Mammary epithelial cell (primary cell): ENCODE measurements at regions of chr4 and their contacts with region 1.

Region 1: GRCh38 chr4:73258686-73259570 is at the start of gene ANKRD17:
- DNase-seq: peak; percentile 94
- H3K4me3 ChIP-seq: peak within 1 kb of the TSS; percentile 70 to 97 (median 96)
- H3K27ac ChIP-seq: peak within 1 kb of the TSS; percentile 97
- H3K4me1 ChIP-seq: peaks cover 12% of the 10 kb centered on the region
- H3K27me3 ChIP-seq: no peaks in the 10 kb centered on the region
- CTCF ChIP-seq: peak in 1 of 2 donors; percentile 22
- total RNA-seq, gene ANKRD17: 66.2 to 70.6 TPM

Region 2: GRCh38 chr4:73036123-73036522 is 222.8 kb before region 1 on chr4:
- CTCF ChIA-PET with region 1: no interaction called
- dilution Hi-C with region 1: no loop called
- in situ Hi-C with region 1: no loop called
- intact Hi-C with region 1: loop called (anchors 1 kb)
- DNase-seq: no peak
- H3K4me3 ChIP-seq: no peak overlapping the region
- H3K27ac ChIP-seq: no peak overlapping the region
- H3K4me1 ChIP-seq: no peaks in the 10 kb centered on the region
- H3K27me3 ChIP-seq: no peaks in the 10 kb centered on the region
- CTCF ChIP-seq: no peak

Region 3: GRCh38 chr4:73047896-73048295 is 211.0 kb before region 1 on chr4:
- CTCF ChIA-PET with region 1: no interaction called
- dilution Hi-C with region 1: no loop called
- in situ Hi-C with region 1: no loop called
- intact Hi-C with region 1: no loop called
- DNase-seq: no peak
- H3K4me3 ChIP-seq: no peak overlapping the region
- H3K27ac ChIP-seq: no peak overlapping the region
- H3K4me1 ChIP-seq: no peaks in the 10 kb centered on the region
- H3K27me3 ChIP-seq: no peaks in the 10 kb centered on the region
- CTCF ChIP-seq: no peak

Region 4: DNA sequence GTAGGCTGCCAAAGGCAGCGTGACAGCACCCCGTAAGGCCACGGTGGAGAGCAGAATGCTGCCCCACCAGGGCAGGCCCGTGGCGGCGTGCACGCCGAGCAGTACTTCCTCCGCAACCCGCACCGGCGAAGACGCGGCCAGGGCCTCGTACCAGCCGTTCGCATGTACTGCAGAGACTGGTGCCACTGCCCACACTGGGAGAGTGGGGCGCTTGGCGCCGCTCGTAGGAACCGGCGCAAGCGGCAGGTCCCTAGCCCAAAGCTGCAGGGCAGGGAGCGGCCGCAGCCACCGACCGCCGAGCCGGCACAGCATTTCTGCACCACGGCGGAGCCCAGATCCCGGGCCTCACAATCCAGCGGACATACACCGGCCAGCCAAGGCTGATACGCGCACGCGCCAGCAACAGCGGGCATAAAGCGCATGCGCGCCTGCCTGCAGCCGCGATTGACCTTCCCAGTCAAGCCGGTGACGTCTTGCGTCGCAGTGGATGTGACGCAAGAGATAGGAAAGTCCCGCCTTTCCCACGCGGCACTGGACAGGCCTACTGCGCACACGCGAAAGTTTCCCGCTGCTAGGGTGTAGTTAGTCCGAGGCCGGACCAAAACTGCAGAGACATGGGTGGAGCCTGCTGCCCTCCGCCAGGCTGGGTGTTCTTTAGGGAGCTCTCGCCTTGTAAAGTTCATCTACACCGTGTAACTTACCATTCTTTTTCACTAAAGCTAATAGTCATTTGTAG is 189.4 kb before region 1 on chr4 and contains the start of gene COX18:
- CTCF ChIA-PET with region 1: no interaction called
- dilution Hi-C with region 1: no loop called
- in situ Hi-C with region 1: no loop called
- intact Hi-C with region 1: loop called (anchors 1 kb)
- DNase-seq: peak; percentile 97
- H3K4me3 ChIP-seq: peak within 1 kb of the TSS; percentile 68 to 88 (median 76)
- H3K27ac ChIP-seq: peak within 1 kb of the TSS; percentile 90
- H3K4me1 ChIP-seq: peaks cover 6% of the 10 kb centered on the region
- H3K27me3 ChIP-seq: no peaks in the 10 kb centered on the region
- CTCF ChIP-seq: peak in 1 of 2 donors; percentile 17
- total RNA-seq, gene COX18: 13.5 to 30.5 TPM

Region 5: GRCh38 chr4:73127839-73128453 is 131.0 kb before region 1 on chr4:
- CTCF ChIA-PET with region 1: no interaction called
- dilution Hi-C with region 1: no loop called
- in situ Hi-C with region 1: no loop called
- intact Hi-C with region 1: loop called (anchors 1 kb)
- DNase-seq: no peak
- H3K4me3 ChIP-seq: no peak overlapping the region
- H3K27ac ChIP-seq: no peak overlapping the region
- H3K4me1 ChIP-seq: no peaks in the 10 kb centered on the region
- H3K27me3 ChIP-seq: no peaks in the 10 kb centered on the region
- CTCF ChIP-seq: peak; percentile 9 to 33

Region 6: GRCh38 chr4:73142995-73143547 is 115.9 kb before region 1 on chr4:
- CTCF ChIA-PET with region 1: no interaction called
- dilution Hi-C with region 1: no loop called
- in situ Hi-C with region 1: no loop called
- intact Hi-C with region 1: loop called (anchors 5 kb)
- DNase-seq: no peak
- H3K4me3 ChIP-seq: no peak overlapping the region
- H3K27ac ChIP-seq: no peak overlapping the region
- H3K4me1 ChIP-seq: no peaks in the 10 kb centered on the region
- H3K27me3 ChIP-seq: no peaks in the 10 kb centered on the region
- CTCF ChIP-seq: peak; percentile 13 to 19

Region 7: GRCh38 chr4:73222466-73223257 is 36.3 kb before region 1 on chr4:
- CTCF ChIA-PET with region 1: no interaction called
- dilution Hi-C with region 1: no loop called
- in situ Hi-C with region 1: no loop called
- intact Hi-C with region 1: loop called (anchors 2 kb)
- DNase-seq: peak; percentile 90
- H3K4me3 ChIP-seq: peak overlapping the region; percentile 55 to 95 (median 86)
- H3K27ac ChIP-seq: peak overlapping the region; percentile 96
- H3K4me1 ChIP-seq: peaks cover 5% of the 10 kb centered on the region
- H3K27me3 ChIP-seq: no peaks in the 10 kb centered on the region
- CTCF ChIP-seq: no peak

Region 8: GRCh38 chr4:73308286-73308685 is 49.4 kb after region 1 on chr4:
- CTCF ChIA-PET with region 1: no interaction called
- dilution Hi-C with region 1: no loop called
- in situ Hi-C with region 1: no loop called
- intact Hi-C with region 1: loop called (anchors 1 kb)
- DNase-seq: peak; percentile 15
- H3K4me3 ChIP-seq: no peak overlapping the region
- H3K27ac ChIP-seq: no peak overlapping the region
- H3K4me1 ChIP-seq: no peaks in the 10 kb centered on the region
- H3K27me3 ChIP-seq: no peaks in the 10 kb centered on the region
- CTCF ChIP-seq: peak; percentile 33 to 40

Region 9: GRCh38 chr4:73406548-73406875 is 147.6 kb after region 1 on chr4:
- CTCF ChIA-PET with region 1: no interaction called
- dilution Hi-C with region 1: no loop called
- in situ Hi-C with region 1: no loop called
- intact Hi-C with region 1: no loop called
- DNase-seq: no peak
- H3K4me3 ChIP-seq: no peak overlapping the region
- H3K27ac ChIP-seq: no peak overlapping the region
- H3K4me1 ChIP-seq: no peaks in the 10 kb centered on the region
- H3K27me3 ChIP-seq: no peaks in the 10 kb centered on the region
- CTCF ChIP-seq: no peak